PC-9 (cell line): ENCODE measurements at regions of chr10 and their contacts with region 1.

Region 1: GRCh38 chr10:96556003-96556402 is 30.8 kb downstream of the TM9SF3 start:
- DNase-seq: no peak
- H3K4me3 ChIP-seq: no peak overlapping the region
- H3K27ac ChIP-seq: no peak overlapping the region
- H3K4me1 ChIP-seq: no peaks in the 10 kb centered on the region
- H3K27me3 ChIP-seq: no peaks in the 10 kb centered on the region
- CTCF ChIP-seq: peak; percentile 45; the same call in 1 of the 2 replicates

Region 2: GRCh38 chr10:96380817-96381216 is 175.2 kb before region 1 on chr10:
- CTCF ChIA-PET with region 1: interaction called, 15 read pairs
- POLR2A ChIA-PET with region 1: no interaction called
- intact Hi-C with region 1: no loop called
- DNase-seq: peak; percentile 52 to 87
- H3K4me3 ChIP-seq: no peak overlapping the region
- H3K27ac ChIP-seq: no peak overlapping the region
- H3K4me1 ChIP-seq: peaks cover 7% of the 10 kb centered on the region
- H3K27me3 ChIP-seq: no peaks in the 10 kb centered on the region
- CTCF ChIP-seq: no peak

Region 3: DNA sequence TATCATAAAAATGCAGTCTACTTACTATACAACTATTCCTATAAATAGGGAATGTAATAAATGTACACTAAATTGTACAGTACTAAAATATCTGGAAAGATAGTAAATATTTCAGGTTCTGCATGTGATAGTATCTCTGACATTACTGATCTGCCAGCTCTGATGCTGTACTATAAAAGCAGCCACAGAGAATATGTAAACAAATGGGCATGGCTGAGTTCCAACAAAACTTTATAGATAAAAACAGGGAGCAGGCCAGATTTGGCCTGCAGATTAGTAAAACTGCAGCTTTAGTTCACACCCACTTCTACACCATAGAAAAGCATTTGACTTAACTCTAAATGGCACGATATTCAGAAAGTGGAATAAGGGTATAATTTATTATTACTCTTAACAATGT is 23.5 kb before region 1 on chr10:
- CTCF ChIA-PET with region 1: no interaction called
- POLR2A ChIA-PET with region 1: no interaction called
- intact Hi-C with region 1: no loop called
- DNase-seq: no peak
- H3K4me3 ChIP-seq: no peak overlapping the region
- H3K27ac ChIP-seq: no peak overlapping the region
- H3K4me1 ChIP-seq: no peaks in the 10 kb centered on the region
- H3K27me3 ChIP-seq: no peaks in the 10 kb centered on the region
- CTCF ChIP-seq: no peak

Region 4: DNA sequence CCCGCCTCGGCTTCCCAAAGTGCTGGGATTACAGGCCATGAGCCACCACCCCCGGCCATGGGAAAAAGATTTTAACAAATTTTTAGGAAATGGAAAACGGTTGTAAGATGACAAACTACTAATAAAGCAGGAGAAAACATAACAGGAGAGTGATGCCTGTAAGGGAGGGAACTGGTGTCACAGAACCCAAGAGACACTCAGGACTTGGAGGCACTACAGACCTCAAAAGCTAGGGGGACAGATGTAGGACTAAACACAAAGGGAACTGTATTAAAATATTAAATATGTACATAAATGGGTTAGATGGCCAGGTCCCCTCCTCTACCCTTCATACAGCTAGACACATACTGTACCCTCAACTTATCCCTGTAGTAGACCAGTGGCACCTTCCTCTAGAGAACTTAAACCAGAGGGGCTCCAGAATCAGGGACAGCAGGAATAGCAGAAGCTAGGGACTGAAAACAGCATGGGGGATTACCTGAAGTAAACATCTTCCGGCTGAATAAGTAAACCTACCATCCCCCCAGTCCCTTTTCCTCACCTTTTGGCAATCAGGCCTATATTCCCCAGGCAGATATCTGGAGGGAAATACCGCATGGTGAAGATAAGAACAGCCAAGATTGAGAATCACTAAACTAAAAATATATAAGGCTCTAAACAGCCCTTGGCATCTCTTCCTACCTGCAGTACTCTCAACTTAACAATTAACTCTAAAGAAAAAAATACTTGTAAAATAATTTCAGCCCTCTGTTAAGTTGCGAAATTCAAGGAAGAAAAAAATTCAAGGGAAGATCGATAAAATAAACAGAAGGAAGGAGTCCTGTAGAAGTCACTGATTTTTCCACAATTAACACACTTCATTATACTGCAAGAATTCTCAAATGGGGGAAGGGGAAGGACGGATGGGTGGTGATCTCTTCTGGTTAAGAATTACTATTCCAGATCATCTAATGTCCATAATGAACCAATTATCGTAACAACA is 15.3 kb after region 1 on chr10:
- CTCF ChIA-PET with region 1: no interaction called
- POLR2A ChIA-PET with region 1: no interaction called
- intact Hi-C with region 1: no loop called
- DNase-seq: no peak
- H3K4me3 ChIP-seq: no peak overlapping the region
- H3K27ac ChIP-seq: no peak overlapping the region
- H3K4me1 ChIP-seq: no peaks in the 10 kb centered on the region
- H3K27me3 ChIP-seq: no peaks in the 10 kb centered on the region
- CTCF ChIP-seq: no peak